H1 (cell line): ENCODE measurements at regions of chr1 and their contacts with region 1.

Region 1: GRCh38 chr1:171355727-171356126 is 41.7 kb downstream of the FMO4 start:
- DNase-seq: no peak
- H3K4me3 ChIP-seq: no peak overlapping the region
- H3K27ac ChIP-seq: no peak overlapping the region
- H3K4me1 ChIP-seq: peaks cover 0 to 5% (median under 1%) of the 10 kb centered on the region in 4 experiments; a peak in 2 of 7 replicates
- H3K27me3 ChIP-seq: no peaks in the 10 kb centered on the region
- CTCF ChIP-seq: no peak
- EP300 ChIP-seq: no peak
- POLR2A ChIP-seq: no peak
- RAD21 ChIP-seq: no peak

Region 2: GRCh38 chr1:171344473-171344820 is 11.3 kb before region 1 on chr1:
- CTCF ChIA-PET with region 1: interaction called, 12 read pairs
- POLR2A ChIA-PET with region 1: interaction called, 3 read pairs
- DNase-seq: no peak
- H3K4me3 ChIP-seq: no peak overlapping the region
- H3K27ac ChIP-seq: no peak overlapping the region
- H3K4me1 ChIP-seq: no peaks in the 10 kb centered on the region
- H3K27me3 ChIP-seq: no peaks in the 10 kb centered on the region
- CTCF ChIP-seq: no peak
- EP300 ChIP-seq: no peak
- POLR2A ChIP-seq: no peak
- RAD21 ChIP-seq: no peak

Region 3: GRCh38 chr1:171367436-171367835 is 11.7 kb after region 1 on chr1:
- CTCF ChIA-PET with region 1: interaction called, 13 read pairs
- POLR2A ChIA-PET with region 1: interaction called, 4 read pairs
- DNase-seq: no peak
- H3K4me3 ChIP-seq: no peak overlapping the region
- H3K27ac ChIP-seq: no peak overlapping the region
- H3K4me1 ChIP-seq: no peaks in the 10 kb centered on the region
- H3K27me3 ChIP-seq: no peaks in the 10 kb centered on the region
- CTCF ChIP-seq: no peak
- EP300 ChIP-seq: no peak
- POLR2A ChIP-seq: no peak
- RAD21 ChIP-seq: no peak